HepG2 (cell line): ENCODE measurements at regions of chr1 and their contacts with region 1.

Region 1: GRCh38 chr1:208159555-208160258 is 84.5 kb downstream of the PLXNA2 start:
- DNase-seq: no peak
- ATAC-seq: no peak
- H3K4me3 ChIP-seq: no peak overlapping the region; a peak in 1 of 6 replicates
- H3K27ac ChIP-seq: peak overlapping the region; percentile 81
- H3K4me1 ChIP-seq: peaks cover 80% of the 10 kb centered on the region
- H3K27me3 ChIP-seq: no peaks in the 10 kb centered on the region
- CTCF ChIP-seq: no peak
- EP300 ChIP-seq: no peak
- POLR2A ChIP-seq: no peak
- RAD21 ChIP-seq: no peak

Region 2: DNA sequence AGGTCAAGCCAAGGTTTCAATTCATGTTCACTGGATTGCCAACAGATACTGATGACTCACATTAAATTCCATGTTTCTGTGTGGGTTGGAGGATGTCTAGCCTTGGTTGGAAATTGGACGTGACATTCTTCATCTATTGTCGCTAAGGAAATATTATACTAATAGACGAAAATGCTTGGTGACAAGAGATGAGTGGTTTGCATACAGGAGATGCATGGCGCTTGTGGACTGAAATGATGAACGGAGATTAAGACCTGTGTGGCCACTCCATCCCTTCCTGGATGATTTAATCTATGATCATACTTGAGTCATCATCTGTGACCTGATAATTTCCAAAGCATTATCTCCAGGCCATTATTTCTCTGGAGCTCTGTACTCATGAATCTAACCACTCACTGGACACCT is 151.8 kb before region 1 on chr1:
- CTCF ChIA-PET with region 1: no interaction called
- POLR2A ChIA-PET with region 1: no interaction called
- in situ Hi-C with region 1: no loop called
- intact Hi-C with region 1: no loop called
- DNase-seq: no peak
- ATAC-seq: no peak
- H3K4me3 ChIP-seq: no peak overlapping the region
- H3K27ac ChIP-seq: no peak overlapping the region
- H3K4me1 ChIP-seq: no peaks in the 10 kb centered on the region
- H3K27me3 ChIP-seq: peaks cover 0 to 6% of the 10 kb centered on the region in 2 experiments; a peak in 2 of 5 replicates
- CTCF ChIP-seq: no peak
- EP300 ChIP-seq: no peak
- POLR2A ChIP-seq: no peak
- RAD21 ChIP-seq: no peak

Region 3: DNA sequence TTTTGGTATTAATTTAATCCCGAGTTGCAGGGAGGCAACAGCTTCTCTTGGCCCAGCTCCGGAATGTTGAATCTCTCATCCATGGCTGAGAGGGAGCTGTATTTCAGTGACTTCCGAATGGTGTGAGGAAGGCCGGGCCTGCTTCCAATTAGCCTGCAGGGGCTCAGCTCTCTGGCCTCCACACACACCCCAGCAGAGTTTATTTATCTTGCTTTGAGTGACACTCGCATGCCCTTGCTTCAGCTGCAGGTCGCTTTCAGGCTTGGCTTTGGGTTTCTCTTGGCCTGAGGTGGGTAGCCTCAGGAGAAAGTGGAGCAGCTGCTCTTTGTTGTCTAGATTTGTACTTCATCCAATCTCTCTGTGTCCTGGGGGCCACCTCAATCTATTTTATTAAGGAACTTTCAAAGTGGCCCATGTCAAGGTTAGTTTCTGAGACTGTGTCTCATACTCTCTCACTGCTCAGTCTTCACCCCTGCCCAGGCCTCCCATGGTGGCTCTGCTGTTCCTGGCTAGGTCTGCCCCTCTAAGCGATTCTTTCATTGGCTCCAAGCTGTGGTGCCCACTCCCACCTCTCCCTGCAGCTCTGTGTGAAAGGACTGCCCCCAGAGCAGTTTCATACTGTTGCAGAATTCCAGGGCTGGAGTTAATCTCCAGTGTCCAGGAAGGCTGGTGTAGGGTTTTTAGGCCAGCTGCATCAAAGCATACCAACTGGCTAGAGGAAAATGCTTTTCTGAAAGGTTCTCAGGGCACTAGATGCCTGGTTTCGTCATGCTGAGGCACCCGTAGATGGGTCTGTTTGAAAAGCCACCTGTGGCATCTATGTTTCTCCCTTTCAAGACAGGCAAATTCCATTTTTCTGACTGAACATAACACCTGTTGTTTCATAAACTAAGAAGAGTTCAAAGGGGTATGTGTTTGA is 69.1 kb before region 1 on chr1:
- CTCF ChIA-PET with region 1: no interaction called
- POLR2A ChIA-PET with region 1: no interaction called
- in situ Hi-C with region 1: no loop called
- intact Hi-C with region 1: no loop called
- DNase-seq: no peak
- ATAC-seq: no peak
- H3K4me3 ChIP-seq: no peak overlapping the region
- H3K27ac ChIP-seq: no peak overlapping the region
- H3K4me1 ChIP-seq: no peaks in the 10 kb centered on the region
- H3K27me3 ChIP-seq: no peaks in the 10 kb centered on the region
- CTCF ChIP-seq: no peak
- EP300 ChIP-seq: no peak
- POLR2A ChIP-seq: no peak
- RAD21 ChIP-seq: no peak

Region 4: GRCh38 chr1:208170252-208170651 is 10.5 kb after region 1 on chr1:
- CTCF ChIA-PET with region 1: no interaction called
- POLR2A ChIA-PET with region 1: interaction called, 14 read pairs
- in situ Hi-C with region 1: no loop called
- intact Hi-C with region 1: no loop called
- DNase-seq: no peak
- ATAC-seq: no peak
- H3K4me3 ChIP-seq: no peak overlapping the region
- H3K27ac ChIP-seq: no peak overlapping the region
- H3K4me1 ChIP-seq: peaks cover 90% of the 10 kb centered on the region
- H3K27me3 ChIP-seq: no peaks in the 10 kb centered on the region
- CTCF ChIP-seq: no peak
- EP300 ChIP-seq: no peak
- POLR2A ChIP-seq: no peak
- RAD21 ChIP-seq: no peak